ENCODE measurements at regions of chr17 and their contacts with region 1.

Region 1: GRCh38 chr17:72592242-72592966 is 471.6 kb downstream of the SOX9 start:
- DNase-seq: peak; percentile 78
- ATAC-seq: peak; percentile 87
- H3K4me3 ChIP-seq: peak overlapping the region; percentile 93 to 99 (median 98)
- H3K27ac ChIP-seq: peak overlapping the region; percentile 58
- H3K4me1 ChIP-seq: peaks cover 39% of the 10 kb centered on the region
- H3K27me3 ChIP-seq: no peaks in the 10 kb centered on the region; a peak in 1 of 5 replicates
- CTCF ChIP-seq: peak; percentile 55
- EP300 ChIP-seq: peak; percentile 42 to 52; a peak in 2 of 4 replicates
- POLR2A ChIP-seq: peak; percentile 100
- RAD21 ChIP-seq: peak; percentile 83

Region 2: GRCh38 chr17:72488551-72489244 is 103.7 kb before region 1 on chr17:
- CTCF ChIA-PET with region 1: no interaction called
- POLR2A ChIA-PET with region 1: no interaction called
- in situ Hi-C with region 1: no loop called
- intact Hi-C with region 1: no loop called
- DNase-seq: no peak
- ATAC-seq: no peak; the same call in 2 of the 3 replicates
- H3K4me3 ChIP-seq: 0 out of 6 replicates have a peak overlapping the region, but pooled peaks of 1 of the 3 experiments have one; percentile 4
- H3K27ac ChIP-seq: no peak overlapping the region
- H3K4me1 ChIP-seq: peaks cover 59% of the 10 kb centered on the region
- H3K27me3 ChIP-seq: no peaks in the 10 kb centered on the region
- CTCF ChIP-seq: no peak
- EP300 ChIP-seq: no peak
- POLR2A ChIP-seq: no peak
- RAD21 ChIP-seq: no peak

Region 3: GRCh38 chr17:72510397-72511016 is 81.9 kb before region 1 on chr17:
- CTCF ChIA-PET with region 1: no interaction called
- POLR2A ChIA-PET with region 1: no interaction called
- in situ Hi-C with region 1: no loop called
- intact Hi-C with region 1: no loop called
- DNase-seq: no peak
- ATAC-seq: peak; percentile 50
- H3K4me3 ChIP-seq: no peak overlapping the region
- H3K27ac ChIP-seq: no peak overlapping the region
- H3K4me1 ChIP-seq: peaks cover 67% of the 10 kb centered on the region
- H3K27me3 ChIP-seq: no peaks in the 10 kb centered on the region
- CTCF ChIP-seq: no peak
- EP300 ChIP-seq: no peak
- POLR2A ChIP-seq: no peak
- RAD21 ChIP-seq: no peak

Region 4: GRCh38 chr17:72529386-72529785 is 63.0 kb before region 1 on chr17:
- CTCF ChIA-PET with region 1: no interaction called
- POLR2A ChIA-PET with region 1: no interaction called
- in situ Hi-C with region 1: no loop called
- intact Hi-C with region 1: no loop called
- DNase-seq: no peak
- ATAC-seq: peak; percentile 47
- H3K4me3 ChIP-seq: no peak overlapping the region
- H3K27ac ChIP-seq: no peak overlapping the region
- H3K4me1 ChIP-seq: peaks cover 65% of the 10 kb centered on the region
- H3K27me3 ChIP-seq: no peaks in the 10 kb centered on the region
- CTCF ChIP-seq: no peak
- EP300 ChIP-seq: no peak
- POLR2A ChIP-seq: no peak
- RAD21 ChIP-seq: no peak

Region 5: GRCh38 chr17:72545766-72546165 is 46.6 kb before region 1 on chr17:
- CTCF ChIA-PET with region 1: no interaction called
- POLR2A ChIA-PET with region 1: no interaction called
- in situ Hi-C with region 1: no loop called
- intact Hi-C with region 1: no loop called
- DNase-seq: no peak
- ATAC-seq: no peak
- H3K4me3 ChIP-seq: no peak overlapping the region
- H3K27ac ChIP-seq: no peak overlapping the region
- H3K4me1 ChIP-seq: peaks cover 25% of the 10 kb centered on the region
- H3K27me3 ChIP-seq: no peaks in the 10 kb centered on the region
- CTCF ChIP-seq: no peak
- EP300 ChIP-seq: no peak
- POLR2A ChIP-seq: no peak
- RAD21 ChIP-seq: no peak

Region 6: DNA sequence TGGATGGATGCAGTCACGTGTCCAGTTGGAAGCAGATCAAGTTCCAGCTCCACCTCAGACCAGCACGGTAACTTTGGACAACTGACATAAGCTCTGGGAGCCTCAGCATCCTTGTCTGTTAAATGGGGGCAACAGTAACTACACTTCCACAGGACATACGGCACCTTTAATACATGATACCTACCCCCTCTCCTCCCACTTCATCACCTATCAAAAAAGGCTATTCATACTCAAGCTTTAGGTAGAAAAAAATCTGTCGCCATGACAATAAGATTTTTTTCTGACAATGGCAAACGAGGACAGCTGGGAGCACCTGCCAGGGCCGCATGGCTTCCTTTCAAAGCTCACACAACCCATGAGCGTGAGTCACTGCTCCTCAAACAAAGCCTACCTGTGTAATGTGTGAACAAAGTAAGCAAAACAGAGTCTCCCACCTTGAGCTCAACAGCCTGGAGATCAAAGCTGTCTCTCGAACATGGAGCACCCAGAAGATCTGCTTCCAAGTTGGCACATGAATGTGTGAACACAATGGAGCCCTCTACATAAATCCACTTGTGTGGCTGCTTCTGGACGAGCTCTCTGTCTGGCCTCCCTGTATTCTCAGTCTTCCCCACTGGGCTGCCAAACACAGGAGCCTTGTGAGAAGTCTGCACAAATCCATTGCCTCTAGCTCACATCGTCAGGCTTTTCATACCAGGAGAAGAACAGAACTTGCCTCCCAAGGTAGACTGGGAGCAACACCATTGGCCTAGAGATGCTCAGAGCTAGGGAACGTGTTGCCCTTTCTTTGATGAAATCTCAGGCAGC is 11.9 kb before region 1 on chr17:
- CTCF ChIA-PET with region 1: no interaction called
- POLR2A ChIA-PET with region 1: interaction called, 117 read pairs
- in situ Hi-C with region 1: no loop called
- intact Hi-C with region 1: loop called (anchors 1 kb)
- DNase-seq: peak; percentile 100
- ATAC-seq: peak; percentile 92
- H3K4me3 ChIP-seq: peak overlapping the region in 1 of 3 experiments; percentile 20; a peak in 1 of 6 replicates
- H3K27ac ChIP-seq: peak overlapping the region; percentile 80
- H3K4me1 ChIP-seq: peaks cover 73% of the 10 kb centered on the region
- H3K27me3 ChIP-seq: no peaks in the 10 kb centered on the region
- CTCF ChIP-seq: no peak
- EP300 ChIP-seq: peak; percentile 95 to 97
- POLR2A ChIP-seq: peak in 1 of 2 experiments; percentile 30; a peak in 2 of 4 replicates
- RAD21 ChIP-seq: 0 out of 2 replicates have a peak, but pooled peaks have one; percentile 6

Region 7: DNA sequence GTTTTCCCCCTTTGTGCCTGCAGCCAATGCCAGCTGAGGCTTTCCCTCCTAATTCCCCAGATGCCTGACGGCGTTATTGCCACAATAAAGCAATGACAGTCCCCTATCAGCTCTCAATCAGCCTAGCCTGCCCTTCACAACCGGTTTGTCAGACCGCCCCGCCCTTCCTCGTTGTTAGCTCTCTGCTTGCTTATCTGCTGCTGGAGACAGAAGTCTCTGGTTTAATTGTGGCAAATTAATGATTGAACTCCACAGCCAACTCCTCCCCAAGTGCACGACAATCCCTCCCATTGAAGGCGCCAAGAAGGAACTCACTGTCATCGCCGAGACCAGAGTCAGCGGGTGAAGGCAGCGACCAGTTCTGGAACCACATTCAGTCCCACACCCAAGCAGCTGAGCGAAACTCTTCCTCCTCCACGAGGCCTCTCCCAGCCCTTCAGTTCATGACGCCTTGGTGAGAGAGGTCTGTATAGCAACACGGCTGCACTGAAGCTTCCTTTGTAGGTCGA is 25.7 kb after region 1 on chr17:
- CTCF ChIA-PET with region 1: no interaction called
- POLR2A ChIA-PET with region 1: interaction called, 17 read pairs
- in situ Hi-C with region 1: no loop called
- intact Hi-C with region 1: loop called (anchors 1 kb)
- DNase-seq: peak; percentile 92
- ATAC-seq: peak; percentile 70
- H3K4me3 ChIP-seq: peak overlapping the region; percentile 33 to 64 (median 40); a peak in 5 of 6 replicates
- H3K27ac ChIP-seq: no peak overlapping the region
- H3K4me1 ChIP-seq: peaks cover 71% of the 10 kb centered on the region
- H3K27me3 ChIP-seq: no peaks in the 10 kb centered on the region
- CTCF ChIP-seq: no peak
- EP300 ChIP-seq: peak in 1 of 2 experiments; percentile 65; a peak in 2 of 4 replicates
- POLR2A ChIP-seq: peak in 1 of 2 experiments; percentile 20; a peak in 1 of 4 replicates
- RAD21 ChIP-seq: no peak

Region 8: DNA sequence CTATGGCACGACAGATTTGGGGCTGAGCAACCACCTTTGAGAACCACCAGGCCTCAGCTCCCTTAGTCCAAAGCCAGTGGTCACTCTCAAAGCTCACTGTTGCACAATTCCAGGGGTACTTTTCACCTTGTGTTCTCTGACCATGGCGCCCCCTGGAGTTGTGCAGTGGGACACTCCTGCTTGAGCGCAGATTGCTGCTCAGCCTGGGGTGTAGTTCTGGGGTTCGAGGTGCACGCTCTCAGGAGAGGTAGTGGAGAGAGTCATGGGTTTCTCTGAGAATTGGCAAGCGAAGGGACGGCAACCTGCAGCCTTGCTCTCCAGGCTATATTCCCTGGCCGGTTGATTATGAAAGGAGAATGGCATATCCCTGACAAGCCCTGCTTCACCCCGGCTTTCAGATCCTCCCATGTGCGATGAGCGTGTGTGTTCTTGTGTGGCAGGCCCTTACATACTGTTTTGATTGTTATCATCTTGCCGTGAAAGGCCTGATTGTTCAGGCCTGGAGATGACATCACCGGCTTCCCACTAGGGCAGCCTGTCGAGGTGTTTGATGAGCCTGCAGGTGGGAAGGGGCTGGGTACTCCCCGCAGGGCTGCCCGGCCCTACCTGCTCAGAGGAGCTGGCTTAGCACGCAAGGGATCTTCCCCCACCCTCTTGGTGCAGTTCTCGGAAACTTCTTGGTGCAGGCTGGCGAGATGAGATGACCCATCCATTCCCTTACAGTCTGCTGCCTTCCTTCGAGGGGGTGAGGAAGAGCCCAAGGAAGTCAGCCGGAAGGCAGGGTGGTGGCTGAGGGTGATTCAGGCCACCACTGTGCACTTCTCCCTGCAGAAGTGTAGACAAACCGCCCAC is 68.9 kb after region 1 on chr17:
- CTCF ChIA-PET with region 1: no interaction called
- POLR2A ChIA-PET with region 1: interaction called, 9 read pairs
- in situ Hi-C with region 1: no loop called
- intact Hi-C with region 1: loop called (anchors 1 kb)
- DNase-seq: peak; percentile 98
- ATAC-seq: peak; percentile 89
- H3K4me3 ChIP-seq: peak overlapping the region in 1 of 3 experiments; percentile 36; a peak in 2 of 6 replicates
- H3K27ac ChIP-seq: peak overlapping the region; percentile 50
- H3K4me1 ChIP-seq: peaks cover 37% of the 10 kb centered on the region
- H3K27me3 ChIP-seq: no peaks in the 10 kb centered on the region
- CTCF ChIP-seq: peak; percentile 78
- EP300 ChIP-seq: peak in 1 of 2 experiments; percentile 78; a peak in 3 of 4 replicates
- POLR2A ChIP-seq: 0 out of 4 replicates have a peak, but pooled peaks of 1 of the 2 experiments have one; percentile 29
- RAD21 ChIP-seq: peak; percentile 46; the same call in 1 of the 2 replicates

Region 9: GRCh38 chr17:72699545-72699944 is 107.1 kb after region 1 on chr17:
- CTCF ChIA-PET with region 1: no interaction called
- POLR2A ChIA-PET with region 1: interaction called, 10 read pairs
- in situ Hi-C with region 1: no loop called
- intact Hi-C with region 1: loop called (anchors 1 kb)
- DNase-seq: no peak
- ATAC-seq: no peak
- H3K4me3 ChIP-seq: no peak overlapping the region
- H3K27ac ChIP-seq: no peak overlapping the region
- H3K4me1 ChIP-seq: peaks cover 46% of the 10 kb centered on the region
- H3K27me3 ChIP-seq: no peaks in the 10 kb centered on the region
- CTCF ChIP-seq: no peak
- EP300 ChIP-seq: no peak
- POLR2A ChIP-seq: no peak
- RAD21 ChIP-seq: no peak

Measured in HepG2 (cell line).